Right cardiac atrium (tissue), 5 donors: ENCODE measurements at regions of chr3 and their contacts with region 1.

Region 1: DNA sequence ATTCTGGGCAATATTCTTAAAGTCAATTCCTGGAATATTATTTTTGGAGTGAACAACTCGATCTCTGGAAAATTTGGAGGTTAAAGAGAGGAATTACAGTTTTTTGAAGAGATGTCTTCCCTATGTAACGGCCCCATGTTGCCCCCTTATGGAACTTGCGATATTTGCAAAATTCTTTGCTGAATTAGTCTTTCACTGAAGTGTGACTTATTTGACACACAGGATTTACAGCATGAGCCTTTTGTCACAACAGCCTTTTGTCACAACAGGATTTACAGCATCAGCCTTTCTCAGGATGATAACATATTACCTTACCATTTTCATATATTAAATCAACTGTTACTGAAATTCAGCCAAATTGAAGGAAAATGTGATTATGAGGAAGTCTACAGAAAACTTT is 37.8 kb upstream of the SPTSSB start:
- DNase-seq: no peak
- ATAC-seq: no peak
- H3K4me3 ChIP-seq: no peak overlapping the region
- H3K27ac ChIP-seq: no peak overlapping the region
- H3K4me1 ChIP-seq: peaks cover 2% of the 10 kb centered on the region
- H3K27me3 ChIP-seq: no peaks in the 10 kb centered on the region

Region 2: DNA sequence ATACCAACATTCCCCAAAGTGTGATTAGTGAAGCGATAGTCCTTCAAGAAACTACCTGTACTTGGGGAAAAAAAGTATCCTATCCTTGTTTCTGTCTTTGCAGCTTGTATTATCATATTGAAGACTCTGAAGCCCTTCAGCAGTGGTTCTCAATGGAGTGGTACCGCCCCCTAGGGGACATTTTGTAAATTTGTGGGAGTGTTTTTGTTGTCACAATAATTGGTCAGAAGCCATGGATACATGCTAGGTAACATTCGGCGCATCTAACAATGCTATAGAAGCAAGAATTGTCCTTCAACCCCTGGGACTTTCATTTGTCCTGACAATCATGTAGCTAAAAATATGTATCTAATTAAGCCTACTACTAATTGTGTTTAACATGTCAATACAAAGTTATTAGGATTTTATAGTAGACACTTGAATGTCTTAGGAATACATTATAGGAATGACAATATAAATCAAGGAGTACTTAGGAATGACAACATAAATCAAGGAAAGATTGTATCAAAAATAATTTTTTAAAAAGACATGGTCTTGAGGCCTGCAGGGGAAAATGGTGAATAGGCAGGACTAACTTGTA is 134.3 kb before region 1 on chr3:
- intact Hi-C with region 1: loop called in 1 of 4 experiments (anchors 5 kb)
- DNase-seq: no peak
- ATAC-seq: peak in 1 of 2 donors; percentile 20
- H3K4me3 ChIP-seq: no peak overlapping the region
- H3K27ac ChIP-seq: no peak overlapping the region
- H3K4me1 ChIP-seq: no peaks in the 10 kb centered on the region
- H3K27me3 ChIP-seq: no peaks in the 10 kb centered on the region